HEK293 (cell line): ENCODE measurements at regions of chr15 and their contacts with region 1.

Region 1: GRCh38 chr15:44231842-44232241 is 36.8 kb upstream of the FRMD5 start:
- H3K4me3 ChIP-seq: no peak overlapping the region
- H3K27ac ChIP-seq: no peak overlapping the region
- H3K4me1 ChIP-seq: no peaks in the 10 kb centered on the region
- CTCF ChIP-seq: no peak

Region 2: DNA sequence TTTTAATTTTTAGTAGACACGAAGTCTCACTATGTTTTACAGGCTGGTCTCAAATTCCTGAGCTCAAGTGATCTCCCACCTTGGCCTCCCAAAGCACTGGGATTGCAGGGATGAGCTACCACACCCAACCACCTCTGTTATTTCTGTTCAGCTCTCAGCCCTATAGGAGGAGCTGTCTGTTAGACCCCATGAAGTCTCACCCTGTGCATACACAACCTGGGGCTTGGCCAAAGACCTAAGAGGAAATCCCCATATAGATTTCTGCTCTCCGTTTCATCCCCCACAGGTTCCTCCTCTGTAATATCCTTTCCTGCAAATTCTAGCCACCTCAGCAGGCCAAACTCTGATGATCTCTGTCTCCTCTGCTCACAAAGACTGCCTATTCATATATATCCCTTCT is 139.0 kb after region 1 on chr15:
- CTCF ChIA-PET with region 1: no interaction called
- POLR2A ChIA-PET with region 1: no interaction called
- H3K4me3 ChIP-seq: no peak overlapping the region
- H3K27ac ChIP-seq: no peak overlapping the region
- H3K4me1 ChIP-seq: no peaks in the 10 kb centered on the region
- CTCF ChIP-seq: no peak

Region 3: GRCh38 chr15:44468713-44469385 is 237.0 kb after region 1 on chr15:
- CTCF ChIA-PET with region 1: no interaction called
- POLR2A ChIA-PET with region 1: interaction called, 10 read pairs
- H3K4me3 ChIP-seq: no peak overlapping the region
- H3K27ac ChIP-seq: no peak overlapping the region
- H3K4me1 ChIP-seq: no peaks in the 10 kb centered on the region
- CTCF ChIP-seq: no peak